ENCODE measurements at regions of chr12 and their contacts with region 1.

Region 1: DNA sequence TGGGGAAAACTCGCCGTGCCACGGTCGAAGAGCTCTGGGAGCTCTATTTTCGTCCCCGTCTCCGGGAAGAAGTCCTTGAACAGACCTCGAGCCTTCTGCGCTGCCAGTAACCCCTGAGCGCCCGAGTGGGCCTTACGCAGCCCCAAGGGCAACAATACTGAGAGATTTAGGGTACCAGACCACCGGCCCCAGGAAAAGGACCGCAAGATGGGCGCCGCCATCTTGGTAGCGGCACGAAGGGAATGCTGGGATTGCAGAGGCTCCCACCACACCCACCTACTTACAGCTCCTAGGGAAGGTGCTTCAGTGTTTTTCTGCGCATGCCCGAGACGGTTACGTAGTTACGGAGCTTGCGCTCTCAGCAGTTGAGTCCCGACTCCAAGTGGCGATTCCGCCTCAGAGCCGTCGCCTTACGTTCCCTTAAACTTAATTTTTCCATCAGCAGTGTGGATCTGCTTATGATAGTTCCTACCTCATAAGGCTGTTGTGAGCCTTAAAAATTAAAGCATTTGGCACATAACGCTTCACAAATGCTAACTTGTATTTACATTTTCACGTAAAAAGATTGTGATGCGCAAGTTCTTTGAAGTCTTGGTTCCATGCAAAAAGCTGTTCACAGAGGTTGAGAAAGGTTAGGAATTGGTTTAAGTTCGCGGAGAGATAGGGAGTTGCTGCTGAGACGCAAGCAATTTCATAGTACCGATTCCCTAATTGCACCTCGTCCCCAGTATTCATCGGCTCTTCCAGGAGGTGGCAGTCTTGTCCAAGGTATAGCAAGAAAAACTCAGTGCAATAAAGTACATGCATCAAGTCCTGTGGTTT is at the start of gene YARS2:
- DNase-seq: peak; percentile 97
- H3K4me3 Mint-ChIP-seq: peak within 1 kb of the TSS; percentile 86
- H3K27ac Mint-ChIP-seq: peak within 1 kb of the TSS; percentile 90
- H3K4me1 Mint-ChIP-seq: peaks cover 13% of the 10 kb centered on the region
- H3K27me3 Mint-ChIP-seq: no peaks in the 10 kb centered on the region
- CTCF ChIP-seq: peak; percentile 80
- total RNA-seq, gene YARS2: 27.2 and 30.1 TPM in 2 replicates

Region 2: DNA sequence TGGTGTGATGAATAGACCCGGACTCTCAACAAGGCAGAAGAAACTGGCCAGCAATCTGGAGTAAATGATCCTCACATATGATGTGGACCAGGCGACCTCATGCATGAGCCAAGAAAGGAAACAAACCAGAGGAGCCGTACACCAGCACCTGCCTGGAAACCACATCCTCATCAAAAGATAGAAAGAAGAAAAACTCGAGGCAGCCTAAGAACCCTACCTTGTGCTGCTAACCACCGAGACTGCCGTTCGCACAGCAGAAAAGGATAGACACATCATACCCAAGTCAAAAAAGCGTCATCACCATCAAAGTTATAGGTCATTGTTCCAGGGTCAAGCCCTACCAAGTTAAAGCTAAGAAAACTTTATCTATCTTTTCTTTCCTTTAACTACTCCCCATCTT is 730.0 kb before region 1 on chr12:
- CTCF ChIA-PET with region 1: no interaction called
- POLR2A ChIA-PET with region 1: no interaction called
- intact Hi-C with region 1: no loop called
- DNase-seq: no peak
- H3K4me3 Mint-ChIP-seq: no peak overlapping the region
- H3K27ac Mint-ChIP-seq: no peak overlapping the region
- H3K4me1 Mint-ChIP-seq: no peaks in the 10 kb centered on the region
- H3K27me3 Mint-ChIP-seq: peaks cover 4% of the 10 kb centered on the region
- CTCF ChIP-seq: no peak

Region 3: DNA sequence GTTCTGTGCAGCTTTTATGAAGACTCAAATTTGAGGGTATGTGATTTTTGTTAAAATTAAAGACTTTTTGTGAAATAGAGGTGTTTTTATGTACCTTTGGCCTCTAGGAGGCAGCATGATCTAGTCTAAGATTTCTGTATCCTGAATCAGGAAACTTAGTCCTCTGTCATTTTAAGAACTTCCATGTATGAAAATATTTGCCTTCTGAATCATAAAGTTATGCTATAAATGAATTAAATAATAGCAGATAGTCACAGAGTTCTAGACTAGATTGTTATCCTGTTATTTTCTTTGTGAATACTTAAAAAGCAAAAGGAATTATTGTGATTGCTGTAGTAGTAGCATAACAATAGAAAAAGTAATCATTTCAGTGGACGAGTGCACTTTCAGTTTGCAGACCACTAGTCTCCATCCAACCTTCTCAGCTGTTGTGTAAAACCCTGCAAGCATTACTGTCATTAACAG is 300.2 kb before region 1 on chr12:
- CTCF ChIA-PET with region 1: interaction called, 3 read pairs
- POLR2A ChIA-PET with region 1: interaction called, 3 read pairs
- intact Hi-C with region 1: loop called (anchors 1 kb)
- DNase-seq: peak; percentile 75
- H3K4me3 Mint-ChIP-seq: peak overlapping the region; percentile 48
- H3K27ac Mint-ChIP-seq: peak overlapping the region; percentile 91
- H3K4me1 Mint-ChIP-seq: peaks cover 60% of the 10 kb centered on the region
- H3K27me3 Mint-ChIP-seq: no peaks in the 10 kb centered on the region
- CTCF ChIP-seq: peak; percentile 78

Region 4: GRCh38 chr12:32548691-32549281 is 207.1 kb before region 1 on chr12:
- CTCF ChIA-PET with region 1: no interaction called
- POLR2A ChIA-PET with region 1: no interaction called
- intact Hi-C with region 1: no loop called
- DNase-seq: peak; percentile 64
- H3K4me3 Mint-ChIP-seq: no peak overlapping the region
- H3K27ac Mint-ChIP-seq: peak overlapping the region; percentile 74
- H3K4me1 Mint-ChIP-seq: peaks cover 32% of the 10 kb centered on the region
- H3K27me3 Mint-ChIP-seq: no peaks in the 10 kb centered on the region
- CTCF ChIP-seq: no peak

Region 5: DNA sequence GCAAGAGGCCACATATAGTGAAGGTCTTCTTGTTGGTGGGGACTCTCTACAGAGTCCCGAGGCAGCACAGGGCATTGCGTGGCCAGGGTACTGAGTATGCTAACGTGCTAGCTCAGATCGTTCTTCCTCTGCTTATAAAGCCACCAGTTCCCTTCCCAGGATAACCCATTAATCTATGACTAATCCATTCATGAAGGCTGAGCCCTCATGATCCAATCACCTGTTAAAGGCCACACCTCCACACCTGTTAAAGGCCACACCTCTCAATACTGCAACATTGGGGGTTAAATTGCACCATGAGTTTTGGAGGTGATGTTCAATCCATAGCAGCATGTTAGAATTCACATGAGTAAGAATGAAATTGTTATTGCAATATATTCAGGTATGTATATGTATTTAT is 12.7 kb after region 1 on chr12:
- CTCF ChIA-PET with region 1: interaction called, 43 read pairs
- POLR2A ChIA-PET with region 1: interaction called, 9 read pairs
- intact Hi-C with region 1: no loop called
- DNase-seq: no peak
- H3K4me3 Mint-ChIP-seq: no peak overlapping the region
- H3K27ac Mint-ChIP-seq: no peak overlapping the region
- H3K4me1 Mint-ChIP-seq: no peaks in the 10 kb centered on the region
- H3K27me3 Mint-ChIP-seq: peaks cover 35% of the 10 kb centered on the region
- CTCF ChIP-seq: no peak

Region 6: GRCh38 chr12:32896432-32897273 is 140.8 kb after region 1 on chr12 and contains the start of gene PKP2:
- CTCF ChIA-PET with region 1: interaction called, 26 read pairs
- POLR2A ChIA-PET with region 1: interaction called, 54 read pairs
- intact Hi-C with region 1: loop called (anchors 2 kb)
- DNase-seq: peak; percentile 88
- H3K4me3 Mint-ChIP-seq: peak within 1 kb of the TSS; percentile 94
- H3K27ac Mint-ChIP-seq: peak within 1 kb of the TSS; percentile 96
- H3K4me1 Mint-ChIP-seq: peaks cover 41% of the 10 kb centered on the region
- H3K27me3 Mint-ChIP-seq: no peaks in the 10 kb centered on the region
- CTCF ChIP-seq: no peak
- total RNA-seq, gene PKP2: 58.5 and 88.0 TPM in 2 replicates

Region 7: GRCh38 chr12:32947206-32948067 is 191.6 kb after region 1 on chr12:
- CTCF ChIA-PET with region 1: interaction called, 50 read pairs
- POLR2A ChIA-PET with region 1: interaction called, 3 read pairs
- intact Hi-C with region 1: loop called (anchors 1 kb)
- DNase-seq: peak; percentile 45
- H3K4me3 Mint-ChIP-seq: no peak overlapping the region
- H3K27ac Mint-ChIP-seq: peak overlapping the region; percentile 69
- H3K4me1 Mint-ChIP-seq: peaks cover 6% of the 10 kb centered on the region
- H3K27me3 Mint-ChIP-seq: peaks cover 11% of the 10 kb centered on the region
- CTCF ChIP-seq: peak; percentile 45

Measured in MCF 10A (cell line).